AG04450 (cell line): ENCODE measurements at regions of chr1 and their contacts with region 1.

Region 1: GRCh38 chr1:40338745-40339424 is 21.8 kb upstream of the COL9A2 start:
- DNase-seq: peak; percentile 45
- H3K4me3 ChIP-seq: no peak overlapping the region; the same call in 1 of the 2 replicates
- H3K27ac ChIP-seq: no peak overlapping the region
- H3K27me3 ChIP-seq: peaks cover 4% of the 10 kb centered on the region
- CTCF ChIP-seq: peak; percentile 100

Region 2: DNA sequence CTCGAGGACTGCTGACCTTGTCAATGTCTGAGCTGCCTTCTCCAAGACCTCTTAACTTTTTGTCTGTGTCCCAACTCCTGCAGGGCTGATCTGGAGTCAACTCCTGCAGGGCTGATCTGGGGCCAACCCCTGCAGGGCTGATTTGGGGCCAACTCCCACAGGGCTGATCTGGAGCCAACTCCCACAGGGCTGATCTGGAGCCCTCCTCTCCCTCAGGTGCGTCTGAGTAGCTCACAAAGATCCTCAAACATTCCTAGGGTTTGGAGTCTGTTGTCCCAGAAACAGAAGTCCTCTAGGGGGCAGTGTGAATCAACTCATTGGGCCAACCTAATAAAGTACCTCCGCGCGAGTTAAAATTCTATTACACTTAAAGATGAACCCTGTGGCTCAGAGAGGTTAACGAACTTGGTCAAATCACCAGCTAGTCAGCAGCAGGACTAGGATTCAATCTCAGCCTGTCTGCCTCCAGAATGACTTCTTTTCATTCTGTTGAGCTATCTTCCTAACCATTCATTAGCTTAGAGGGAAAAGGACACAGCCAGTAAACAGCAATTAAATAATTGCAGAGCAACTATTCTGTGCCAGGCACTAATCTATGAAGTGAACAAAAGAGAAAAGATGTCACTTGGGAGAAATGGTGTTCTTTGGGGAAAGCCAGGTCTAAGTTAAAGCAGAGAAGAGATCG is 194.9 kb before region 1 on chr1:
- CTCF ChIA-PET with region 1: interaction called, 143 read pairs
- POLR2A ChIA-PET with region 1: interaction called, 4 read pairs
- DNase-seq: peak; percentile 36
- H3K4me3 ChIP-seq: no peak overlapping the region
- H3K27ac ChIP-seq: no peak overlapping the region
- H3K27me3 ChIP-seq: peaks cover 30% of the 10 kb centered on the region
- CTCF ChIP-seq: peak; percentile 85

Region 3: DNA sequence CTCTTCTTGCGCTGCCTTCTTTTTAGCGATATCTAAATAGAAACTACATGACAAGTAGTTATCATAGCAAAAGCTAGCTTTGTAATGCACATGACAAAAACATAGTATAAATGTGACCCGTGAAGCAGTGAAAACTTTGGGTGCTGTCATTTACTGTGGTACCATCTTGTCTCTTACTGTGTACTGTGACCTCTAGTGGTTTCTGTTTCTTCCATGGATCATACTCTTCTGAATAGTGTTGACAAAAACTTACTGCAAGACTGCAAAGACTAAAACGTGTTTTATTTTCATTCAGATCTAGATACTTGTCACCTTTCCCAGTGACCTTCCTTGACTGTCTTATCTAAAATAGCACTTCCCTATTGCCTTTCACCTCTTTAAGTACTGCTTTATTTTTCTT is 171.6 kb before region 1 on chr1:
- CTCF ChIA-PET with region 1: interaction called, 14 read pairs
- POLR2A ChIA-PET with region 1: no interaction called
- DNase-seq: no peak
- H3K4me3 ChIP-seq: no peak overlapping the region
- H3K27ac ChIP-seq: no peak overlapping the region
- H3K27me3 ChIP-seq: no peaks in the 10 kb centered on the region
- CTCF ChIP-seq: no peak

Region 4: GRCh38 chr1:40291293-40291692 is 47.6 kb before region 1 on chr1:
- CTCF ChIA-PET with region 1: interaction called, 11 read pairs
- POLR2A ChIA-PET with region 1: no interaction called
- DNase-seq: no peak
- H3K4me3 ChIP-seq: no peak overlapping the region
- H3K27ac ChIP-seq: no peak overlapping the region
- H3K27me3 ChIP-seq: no peaks in the 10 kb centered on the region
- CTCF ChIP-seq: no peak

Region 5: GRCh38 chr1:40357625-40358024 is 18.7 kb after region 1 on chr1:
- CTCF ChIA-PET with region 1: interaction called, 11 read pairs
- POLR2A ChIA-PET with region 1: no interaction called
- DNase-seq: no peak
- H3K4me3 ChIP-seq: no peak overlapping the region
- H3K27ac ChIP-seq: no peak overlapping the region
- H3K27me3 ChIP-seq: peaks cover 6% of the 10 kb centered on the region
- CTCF ChIP-seq: no peak